A549 (cell line): ENCODE measurements at regions of chr5 and their contacts with region 1.

Region 1: GRCh38 chr5:135834639-135835529 is at the start of gene SLC25A48:
- DNase-seq: peak; percentile 75 to 87
- ATAC-seq: peak; percentile 54 to 90
- H3K4me3 ChIP-seq: peak within 1 kb of the TSS; percentile 47
- H3K27ac ChIP-seq: peak within 1 kb of the TSS in 1 of 2 experiments; percentile 46; a peak in 2 of 6 replicates
- H3K4me1 ChIP-seq: 0 out of 3 replicates have a peak, but pooled peaks cover 6% of the 10 kb centered on the region
- CTCF ChIP-seq: peak; percentile 56
- EP300 ChIP-seq: no peak
- POLR2A ChIP-seq: no peak
- RAD21 ChIP-seq: peak; percentile 13 to 35; a peak in 1 of 5 replicates
- polyA plus RNA-seq, gene SLC25A48: not detected in 2 replicates

Region 2: DNA sequence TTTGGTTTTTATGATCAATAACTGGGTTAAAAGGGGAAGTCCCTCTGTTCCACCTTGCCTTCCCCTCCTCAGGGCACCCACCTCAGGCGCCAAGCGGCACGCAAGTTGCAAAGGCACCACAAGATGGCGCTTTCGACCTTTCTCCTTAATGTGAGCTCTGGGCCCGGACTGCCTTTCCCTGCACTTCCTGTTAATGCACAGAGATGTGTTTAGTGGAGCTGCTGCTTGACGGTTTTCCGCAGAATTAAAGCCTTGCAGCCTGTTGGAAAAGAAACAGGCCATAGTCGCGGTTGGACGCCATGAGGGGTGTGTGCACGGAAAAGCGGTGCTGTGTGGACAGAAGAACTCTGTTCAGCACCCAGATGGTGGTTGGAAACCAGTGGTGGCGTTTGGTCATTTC is 274.0 kb before region 1 on chr5:
- CTCF ChIA-PET with region 1: interaction called, 153 read pairs
- POLR2A ChIA-PET with region 1: no interaction called
- DNase-seq: peak; percentile 76 to 86
- ATAC-seq: peak; percentile 93 to 98
- H3K4me3 ChIP-seq: no peak overlapping the region
- H3K27ac ChIP-seq: no peak overlapping the region
- H3K4me1 ChIP-seq: no peaks in the 10 kb centered on the region
- CTCF ChIP-seq: peak; percentile 84
- EP300 ChIP-seq: no peak
- POLR2A ChIP-seq: no peak
- RAD21 ChIP-seq: peak; percentile 80 to 82

Region 3: DNA sequence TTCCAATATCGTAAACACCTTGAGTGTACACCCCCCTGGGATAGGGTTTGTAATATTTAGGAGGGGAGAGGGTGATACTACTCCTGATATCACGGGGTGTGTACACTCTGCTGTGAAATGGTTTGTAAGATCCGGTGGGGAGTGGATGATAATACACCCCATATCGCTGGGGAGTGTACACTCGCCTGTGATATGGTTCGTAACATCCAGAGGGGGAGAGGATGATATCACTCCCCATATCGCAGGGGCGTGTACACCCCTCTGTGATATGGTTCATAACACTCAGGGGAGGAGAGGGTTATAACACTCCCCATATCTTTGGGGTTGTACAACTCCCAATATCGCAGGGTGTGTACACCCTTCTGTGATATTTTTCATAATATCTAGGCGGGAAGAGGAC is 34.2 kb before region 1 on chr5:
- CTCF ChIA-PET with region 1: no interaction called
- POLR2A ChIA-PET with region 1: no interaction called
- DNase-seq: no peak
- ATAC-seq: 0 out of 6 replicates have a peak, but pooled peaks of 1 of the 2 experiments have one; percentile 36
- H3K4me3 ChIP-seq: no peak overlapping the region
- H3K27ac ChIP-seq: no peak overlapping the region
- H3K4me1 ChIP-seq: no peaks in the 10 kb centered on the region
- CTCF ChIP-seq: no peak
- EP300 ChIP-seq: no peak
- POLR2A ChIP-seq: no peak
- RAD21 ChIP-seq: no peak

Region 4: GRCh38 chr5:135821061-135821801 is 13.7 kb before region 1 on chr5:
- CTCF ChIA-PET with region 1: interaction called, 49 read pairs
- POLR2A ChIA-PET with region 1: no interaction called
- DNase-seq: no peak
- ATAC-seq: peak in 1 of 2 experiments; percentile 19; a peak in 1 of 6 replicates
- H3K4me3 ChIP-seq: no peak overlapping the region
- H3K27ac ChIP-seq: no peak overlapping the region
- H3K4me1 ChIP-seq: 0 out of 3 replicates have a peak, but pooled peaks cover 5% of the 10 kb centered on the region
- CTCF ChIP-seq: no peak
- EP300 ChIP-seq: no peak
- POLR2A ChIP-seq: no peak
- RAD21 ChIP-seq: no peak

Region 5: DNA sequence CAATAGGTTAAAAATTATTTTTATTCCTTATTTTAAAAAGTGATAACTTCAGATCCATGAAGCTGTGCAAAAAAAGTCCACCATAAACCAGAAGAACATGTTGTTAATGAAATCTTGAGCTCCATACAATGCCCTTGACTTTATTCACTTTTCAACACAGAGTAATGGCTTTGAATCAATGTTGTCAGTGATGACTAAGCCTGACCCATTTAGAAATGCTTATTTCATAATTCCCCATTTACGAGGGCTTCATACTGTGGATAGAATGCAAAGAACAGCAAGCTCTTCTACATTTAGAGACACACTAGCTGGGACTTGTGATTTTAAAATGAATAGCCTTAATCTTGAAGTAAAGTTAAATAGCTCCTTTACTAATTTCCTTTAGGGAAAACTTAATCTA is 86.5 kb after region 1 on chr5:
- CTCF ChIA-PET with region 1: no interaction called
- POLR2A ChIA-PET with region 1: no interaction called
- DNase-seq: no peak
- ATAC-seq: peak; percentile 70 to 76; a peak in 4 of 6 replicates
- H3K4me3 ChIP-seq: no peak overlapping the region
- H3K27ac ChIP-seq: no peak overlapping the region
- H3K4me1 ChIP-seq: peaks cover 10% of the 10 kb centered on the region; the same call in 2 of the 3 replicates
- CTCF ChIP-seq: no peak
- EP300 ChIP-seq: no peak
- POLR2A ChIP-seq: no peak
- RAD21 ChIP-seq: no peak